Activated T-helper 1 cell treated with anti-CD3 and anti-CD28 coated beads, Interleukin-12 subunit alpha, Interleukin-12 subunit beta, Interleukin-2, Interleukin-4 antibody, amounts not matched to agents 30 ng/mL and 10 ng/mL and 1 ng/mL, durations not matched to agents 14 hours and 24 hours and 36 hours (primary cell): ENCODE measurements at regions of chr12 and their contacts with region 1.

Region 1: GRCh38 chr12:64385468-64385867 is 5.1 kb downstream of the C12orf56 start:
- DNase-seq: no peak
- H3K4me3 Mint-ChIP-seq: peak overlapping the region; percentile 38
- H3K27ac Mint-ChIP-seq: peak overlapping the region; percentile 85
- H3K4me1 Mint-ChIP-seq: peaks cover 30% of the 10 kb centered on the region
- H3K27me3 Mint-ChIP-seq: peaks cover 5% of the 10 kb centered on the region

Region 2: DNA sequence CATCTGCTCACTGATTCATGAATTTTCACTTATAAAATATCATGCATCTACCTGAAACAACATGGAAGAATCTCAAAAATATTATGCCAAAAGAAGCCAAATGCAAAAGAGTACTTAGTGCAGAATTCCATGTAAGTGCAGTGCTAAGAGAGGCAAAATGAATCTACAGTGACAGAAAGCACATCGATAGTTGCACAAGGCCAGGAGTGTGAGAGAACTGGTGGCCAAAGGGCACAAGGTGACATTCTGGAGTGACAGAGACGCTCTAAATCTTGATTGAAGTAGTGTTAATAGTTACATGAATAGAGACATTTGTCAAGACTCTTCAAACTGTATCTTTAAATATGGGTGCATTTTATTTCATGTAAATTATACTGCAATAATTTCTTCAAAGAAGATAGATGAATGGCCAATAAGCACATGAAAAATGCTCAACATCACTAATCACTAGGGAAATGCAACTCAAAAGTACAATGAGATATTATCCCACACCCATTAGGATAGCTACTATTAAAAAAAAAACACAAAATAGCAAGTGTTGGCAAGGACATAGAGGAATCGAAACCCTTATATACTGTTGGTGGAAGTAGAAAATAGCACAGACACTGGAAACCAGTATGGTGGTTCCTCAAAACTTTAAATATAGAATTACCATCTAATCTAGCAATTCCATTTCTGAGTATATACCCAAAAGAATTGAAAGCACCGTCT is 91.7 kb before region 1 on chr12:
- intact Hi-C with region 1: loop called (anchors 10 kb)
- DNase-seq: no peak
- H3K4me3 Mint-ChIP-seq: no peak overlapping the region
- H3K27ac Mint-ChIP-seq: no peak overlapping the region
- H3K4me1 Mint-ChIP-seq: no peaks in the 10 kb centered on the region
- H3K27me3 Mint-ChIP-seq: peaks cover 5% of the 10 kb centered on the region

Region 3: GRCh38 chr12:64318605-64319004 is 66.9 kb before region 1 on chr12:
- intact Hi-C with region 1: no loop called
- DNase-seq: no peak
- H3K4me3 Mint-ChIP-seq: no peak overlapping the region
- H3K27ac Mint-ChIP-seq: no peak overlapping the region
- H3K4me1 Mint-ChIP-seq: no peaks in the 10 kb centered on the region
- H3K27me3 Mint-ChIP-seq: no peaks in the 10 kb centered on the region